MCF 10A (cell line): ENCODE measurements at regions of chr3 and their contacts with region 1.

Region 1: GRCh38 chr3:152524198-152525140 is 255.7 kb downstream of the MBNL1 start:
- DNase-seq: peak; percentile 69
- H3K4me3 Mint-ChIP-seq: no peak overlapping the region
- H3K27ac Mint-ChIP-seq: no peak overlapping the region
- H3K4me1 Mint-ChIP-seq: no peaks in the 10 kb centered on the region
- H3K27me3 Mint-ChIP-seq: no peaks in the 10 kb centered on the region
- CTCF ChIP-seq: peak; percentile 66

Region 2: GRCh38 chr3:152471814-152472671 is 52.4 kb before region 1 on chr3:
- CTCF ChIA-PET with region 1: interaction called, 6 read pairs
- POLR2A ChIA-PET with region 1: interaction called, 8 read pairs
- intact Hi-C with region 1: loop called (anchors 1 kb)
- DNase-seq: peak; percentile 59
- H3K4me3 Mint-ChIP-seq: no peak overlapping the region
- H3K27ac Mint-ChIP-seq: no peak overlapping the region
- H3K4me1 Mint-ChIP-seq: no peaks in the 10 kb centered on the region
- H3K27me3 Mint-ChIP-seq: no peaks in the 10 kb centered on the region
- CTCF ChIP-seq: peak; percentile 42

Region 3: GRCh38 chr3:152508705-152509104 is 15.8 kb before region 1 on chr3:
- CTCF ChIA-PET with region 1: interaction called, 15 read pairs
- POLR2A ChIA-PET with region 1: interaction called, 3 read pairs
- intact Hi-C with region 1: no loop called
- DNase-seq: peak; percentile 31
- H3K4me3 Mint-ChIP-seq: no peak overlapping the region
- H3K27ac Mint-ChIP-seq: no peak overlapping the region
- H3K4me1 Mint-ChIP-seq: no peaks in the 10 kb centered on the region
- H3K27me3 Mint-ChIP-seq: no peaks in the 10 kb centered on the region
- CTCF ChIP-seq: peak; percentile 35

Region 4: GRCh38 chr3:152606146-152606545 is 81.7 kb after region 1 on chr3:
- CTCF ChIA-PET with region 1: no interaction called
- POLR2A ChIA-PET with region 1: no interaction called
- intact Hi-C with region 1: no loop called
- DNase-seq: no peak
- H3K4me3 Mint-ChIP-seq: no peak overlapping the region
- H3K27ac Mint-ChIP-seq: no peak overlapping the region
- H3K4me1 Mint-ChIP-seq: no peaks in the 10 kb centered on the region
- H3K27me3 Mint-ChIP-seq: no peaks in the 10 kb centered on the region
- CTCF ChIP-seq: no peak